ENCODE measurements at regions of chr1 and their contacts with region 1.

Region 1: GRCh38 chr1:151399890-151400495 is 620 bp downstream of the PSMB4 start:
- DNase-seq: peak in 2 of 3 donors; percentile 27 to 47
- ATAC-seq: peak; percentile 32 to 39
- H3K4me3 ChIP-seq: peak overlapping the region; percentile 99
- H3K27ac ChIP-seq: peak overlapping the region; percentile 78
- H3K4me1 ChIP-seq: no peaks in the 10 kb centered on the region
- H3K27me3 ChIP-seq: no peaks in the 10 kb centered on the region

Region 2: DNA sequence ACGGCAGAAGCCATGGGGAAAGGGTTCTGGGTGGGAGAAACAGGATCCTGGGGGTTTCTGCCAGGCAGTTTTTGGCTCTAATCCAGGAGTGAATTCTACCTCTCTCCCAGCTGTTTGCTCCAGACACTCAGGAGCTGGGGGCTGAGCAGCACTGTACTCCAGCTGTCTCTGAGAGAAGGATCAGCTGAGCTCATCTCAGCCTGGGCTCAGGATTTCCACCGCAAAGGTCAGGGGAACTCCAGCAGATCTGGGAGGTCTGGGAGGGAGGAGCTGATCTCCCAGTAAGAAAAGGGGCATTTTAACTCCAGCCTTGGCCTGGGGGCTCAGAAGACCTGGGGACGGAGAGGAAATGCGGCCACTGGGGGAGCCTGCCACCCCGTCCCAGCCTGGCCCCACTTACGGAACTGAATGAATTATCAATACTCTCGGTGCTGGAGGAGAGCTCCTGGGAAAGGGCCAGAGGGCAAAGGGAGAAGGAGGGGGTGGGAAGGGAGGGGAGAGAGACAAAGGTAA is 90.1 kb before region 1 on chr1:
- intact Hi-C with region 1: loop called in 1 of 4 experiments (anchors 10 kb)
- DNase-seq: peak in 1 of 3 donors; percentile 62
- ATAC-seq: peak in 1 of 2 donors; percentile 26
- H3K4me3 ChIP-seq: no peak overlapping the region
- H3K27ac ChIP-seq: peak overlapping the region; percentile 96
- H3K4me1 ChIP-seq: peaks cover 33% of the 10 kb centered on the region
- H3K27me3 ChIP-seq: no peaks in the 10 kb centered on the region

Region 3: DNA sequence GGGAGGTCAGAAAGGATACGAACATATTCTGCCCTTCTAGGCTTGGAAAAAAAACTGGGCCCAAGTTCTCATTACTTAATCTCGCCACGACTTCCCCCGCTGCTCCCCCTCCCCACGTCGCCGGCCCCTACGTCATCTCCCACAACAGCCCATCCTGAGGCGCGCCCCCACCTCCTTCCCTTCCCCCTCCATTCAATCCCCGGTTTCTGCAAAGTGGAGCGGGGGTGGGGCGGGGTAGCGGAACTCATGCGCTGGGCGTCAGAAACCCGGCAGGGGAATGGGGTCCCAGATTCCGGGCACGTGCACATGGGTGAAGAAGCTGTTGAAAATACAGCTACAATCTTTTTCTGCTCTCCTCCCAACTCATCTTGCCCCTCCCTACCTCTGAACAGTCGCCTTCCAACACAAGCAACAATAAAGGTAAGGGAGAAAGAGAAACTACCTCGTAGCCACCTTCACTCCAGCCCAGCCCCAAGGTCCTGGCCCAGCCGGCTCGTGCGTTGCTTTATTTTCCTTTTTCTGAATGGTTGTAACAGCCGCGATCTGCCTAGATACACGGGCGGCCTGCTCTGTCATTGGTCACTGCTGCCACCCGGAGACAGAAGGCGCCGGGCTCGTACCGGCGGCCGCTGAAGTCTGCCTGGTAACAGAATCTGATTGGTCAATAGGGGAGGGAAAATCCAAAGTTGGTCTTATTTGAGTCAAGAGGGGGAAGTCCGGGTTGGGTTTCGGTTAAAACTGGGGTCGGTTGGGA is 53.0 kb before region 1 on chr1 and contains the start of gene RFX5:
- intact Hi-C with region 1: loop called in 3 of 4 experiments (anchors 10 kb)
- DNase-seq: peak; percentile 93 to 97 (median 97)
- ATAC-seq: peak; percentile 98 to 99
- H3K4me3 ChIP-seq: peak within 1 kb of the TSS; percentile 71
- H3K27ac ChIP-seq: peak within 1 kb of the TSS; percentile 84
- H3K4me1 ChIP-seq: peaks cover 3% of the 10 kb centered on the region
- H3K27me3 ChIP-seq: no peaks in the 10 kb centered on the region
- total RNA-seq, gene RFX5: 20.3 to 23.1 (median 21.6) TPM

Region 4: DNA sequence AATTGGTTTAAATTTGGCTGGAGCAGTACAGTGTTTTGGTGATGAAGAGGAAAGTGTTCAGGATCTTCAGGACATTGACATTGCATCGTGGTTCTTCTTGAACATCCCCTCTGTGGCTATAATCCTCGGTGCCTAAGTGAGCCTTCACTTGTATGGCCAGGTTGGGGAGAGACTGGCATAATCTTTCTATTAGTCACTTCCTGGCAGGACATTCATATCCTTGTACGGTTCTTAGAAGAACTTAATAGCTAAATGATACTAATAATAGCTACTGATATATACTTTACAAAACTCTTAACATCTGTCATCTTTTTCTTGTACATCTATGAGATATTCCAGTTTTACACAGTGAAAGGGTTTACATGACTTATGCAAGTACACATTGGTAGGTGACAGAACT is 280.8 kb after region 1 on chr1:
- intact Hi-C with region 1: no loop called
- DNase-seq: no peak
- ATAC-seq: peak; percentile 50 to 61
- H3K4me3 ChIP-seq: no peak overlapping the region
- H3K27ac ChIP-seq: no peak overlapping the region
- H3K4me1 ChIP-seq: no peaks in the 10 kb centered on the region
- H3K27me3 ChIP-seq: no peaks in the 10 kb centered on the region